IMR-90 (cell line): ENCODE measurements at regions of chr1 and their contacts with region 1.

Region 1: GRCh38 chr1:178093205-178093957 is 523 bp upstream of the RASAL2 start:
- DNase-seq: peak; percentile 96
- ATAC-seq: peak; percentile 85
- H3K4me3 ChIP-seq: peak overlapping the region; percentile 77
- H3K27ac ChIP-seq: peak overlapping the region; percentile 70
- H3K4me1 ChIP-seq: peaks cover 9% of the 10 kb centered on the region; the same call in 1 of the 2 replicates
- H3K27me3 ChIP-seq: no peaks in the 10 kb centered on the region
- CTCF ChIP-seq: 0 out of 2 replicates have a peak, but pooled peaks have one; percentile 4
- POLR2A ChIP-seq: no peak; the same call in none of the 2 replicates
- RAD21 ChIP-seq: no peak

Region 2: DNA sequence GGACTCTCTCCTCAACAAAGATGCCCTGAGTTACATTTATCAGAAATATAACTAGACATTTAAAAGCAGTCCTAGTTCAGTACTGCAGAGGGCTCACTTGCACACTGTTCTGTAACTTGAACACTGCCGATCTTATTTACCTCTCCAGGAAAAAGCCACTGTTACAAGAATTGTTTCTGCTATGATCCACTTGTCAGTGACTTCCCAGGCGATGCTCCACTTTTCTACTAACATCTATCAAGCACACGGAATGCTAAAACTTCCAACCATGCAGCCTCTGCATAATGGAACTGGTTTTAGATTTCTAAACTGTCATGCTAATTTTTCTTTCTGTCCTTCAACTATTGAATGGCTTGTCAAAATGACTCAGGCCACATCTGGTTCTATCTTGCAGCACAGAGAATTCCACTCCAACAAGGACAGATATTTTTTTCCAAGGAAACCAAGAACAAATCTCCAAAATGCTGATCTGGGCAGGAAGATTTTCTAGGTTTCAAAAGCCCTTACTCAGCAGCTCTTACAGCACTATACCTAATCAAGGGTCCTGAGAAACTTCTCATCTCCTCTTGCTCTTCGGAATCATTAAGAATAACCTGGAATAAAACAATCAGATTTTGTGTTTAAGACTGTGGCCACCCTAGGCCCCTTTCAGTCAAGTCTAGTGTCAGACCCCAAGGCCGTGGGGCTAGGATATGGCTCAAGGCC is 133.4 kb before region 1 on chr1:
- CTCF ChIA-PET with region 1: no interaction called
- POLR2A ChIA-PET with region 1: no interaction called
- dilution Hi-C with region 1: no loop called
- in situ Hi-C with region 1: no loop called
- intact Hi-C with region 1: loop called (anchors 2 kb)
- DNase-seq: peak; percentile 68
- ATAC-seq: peak; percentile 91
- H3K4me3 ChIP-seq: no peak overlapping the region
- H3K27ac ChIP-seq: no peak overlapping the region
- H3K4me1 ChIP-seq: peaks cover 15% of the 10 kb centered on the region
- H3K27me3 ChIP-seq: no peaks in the 10 kb centered on the region
- CTCF ChIP-seq: peak; percentile 66
- POLR2A ChIP-seq: no peak
- RAD21 ChIP-seq: peak; percentile 79

Region 3: GRCh38 chr1:178055779-178056471 is 37.5 kb before region 1 on chr1:
- CTCF ChIA-PET with region 1: no interaction called
- POLR2A ChIA-PET with region 1: no interaction called
- dilution Hi-C with region 1: no loop called
- in situ Hi-C with region 1: no loop called
- intact Hi-C with region 1: loop called (anchors 5 kb)
- DNase-seq: peak; percentile 25
- ATAC-seq: peak; percentile 44; the same call in 1 of the 2 replicates
- H3K4me3 ChIP-seq: no peak overlapping the region
- H3K27ac ChIP-seq: no peak overlapping the region
- H3K4me1 ChIP-seq: peaks cover 15% of the 10 kb centered on the region
- H3K27me3 ChIP-seq: no peaks in the 10 kb centered on the region
- CTCF ChIP-seq: 0 out of 2 replicates have a peak, but pooled peaks have one; percentile 8
- POLR2A ChIP-seq: no peak
- RAD21 ChIP-seq: no peak

Region 4: DNA sequence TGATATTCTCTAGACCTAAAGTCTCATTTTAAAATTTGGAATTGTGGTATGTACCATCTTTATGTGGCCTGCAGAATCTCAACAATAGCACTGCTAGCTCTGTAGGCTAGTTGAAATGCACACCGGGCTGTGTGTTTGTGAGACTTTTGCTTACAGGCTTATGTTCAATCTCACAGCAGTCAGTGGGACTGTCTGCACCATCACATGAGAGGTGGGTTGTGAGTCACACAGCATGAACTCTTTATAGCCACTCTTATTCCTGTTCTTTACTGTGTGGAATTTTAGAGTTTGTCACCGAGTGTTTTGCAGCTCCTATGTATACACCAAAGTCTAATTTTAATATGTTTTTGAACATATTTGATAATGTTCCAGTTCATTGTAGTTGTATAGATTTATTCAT is 75.2 kb after region 1 on chr1:
- CTCF ChIA-PET with region 1: no interaction called
- POLR2A ChIA-PET with region 1: no interaction called
- dilution Hi-C with region 1: no loop called
- in situ Hi-C with region 1: no loop called
- intact Hi-C with region 1: loop called (anchors 2 kb)
- DNase-seq: peak; percentile 77
- ATAC-seq: peak; percentile 90
- H3K4me3 ChIP-seq: no peak overlapping the region
- H3K27ac ChIP-seq: no peak overlapping the region
- H3K4me1 ChIP-seq: no peaks in the 10 kb centered on the region; the same call in 1 of the 2 replicates
- H3K27me3 ChIP-seq: no peaks in the 10 kb centered on the region
- CTCF ChIP-seq: no peak
- POLR2A ChIP-seq: no peak
- RAD21 ChIP-seq: no peak

Region 5: DNA sequence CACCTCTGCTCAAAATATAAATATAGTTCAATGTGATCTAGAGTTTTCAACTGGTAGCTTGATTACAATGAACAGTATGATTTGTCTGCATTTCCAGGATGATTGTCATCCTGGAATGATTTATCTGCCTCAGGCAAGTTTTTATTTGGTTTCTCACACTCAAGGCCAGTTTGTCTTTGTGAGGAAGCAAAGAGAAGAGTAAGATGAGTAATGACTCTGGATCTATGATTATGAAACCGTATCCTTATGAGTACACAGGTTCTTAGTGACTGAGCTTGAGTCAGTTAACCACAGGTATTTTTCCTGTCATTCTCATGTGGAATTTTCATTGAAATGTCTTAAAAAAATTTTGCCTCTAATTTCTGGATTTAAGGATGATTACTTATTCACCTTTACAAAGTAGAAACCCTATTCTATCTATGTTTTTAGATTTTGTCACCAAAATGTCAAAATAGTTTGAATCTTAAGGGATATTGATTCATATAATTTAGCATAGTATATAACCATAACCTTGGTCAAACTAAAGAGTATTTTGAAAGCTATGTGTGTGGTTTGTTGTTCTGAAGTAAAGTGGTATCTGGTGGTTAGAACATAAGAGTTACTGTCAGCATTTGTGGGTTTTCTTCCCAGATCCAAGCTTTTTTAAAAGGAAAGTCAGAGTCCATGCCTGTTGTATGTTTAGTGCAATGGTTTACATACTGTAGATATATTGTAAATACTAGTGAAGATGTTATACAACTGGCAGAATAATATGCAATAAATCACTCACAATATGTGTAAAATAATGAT is 145.5 kb after region 1 on chr1:
- CTCF ChIA-PET with region 1: no interaction called
- POLR2A ChIA-PET with region 1: interaction called, 3 read pairs
- dilution Hi-C with region 1: no loop called
- in situ Hi-C with region 1: no loop called
- intact Hi-C with region 1: loop called (anchors 5 kb)
- DNase-seq: peak; percentile 98
- ATAC-seq: peak; percentile 75
- H3K4me3 ChIP-seq: no peak overlapping the region
- H3K27ac ChIP-seq: peak overlapping the region; percentile 33; the same call in 1 of the 2 replicates
- H3K4me1 ChIP-seq: peaks cover 7% of the 10 kb centered on the region
- H3K27me3 ChIP-seq: no peaks in the 10 kb centered on the region
- CTCF ChIP-seq: no peak
- POLR2A ChIP-seq: no peak
- RAD21 ChIP-seq: peak; percentile 15; the same call in 1 of the 2 replicates

Region 6: GRCh38 chr1:178262120-178262500 is 168.7 kb after region 1 on chr1:
- CTCF ChIA-PET with region 1: no interaction called
- POLR2A ChIA-PET with region 1: no interaction called
- dilution Hi-C with region 1: no loop called
- in situ Hi-C with region 1: no loop called
- intact Hi-C with region 1: loop called (anchors 5 kb)
- DNase-seq: peak; percentile 92
- ATAC-seq: peak; percentile 80
- H3K4me3 ChIP-seq: no peak overlapping the region; the same call in 1 of the 2 replicates
- H3K27ac ChIP-seq: peak overlapping the region; percentile 40; the same call in 1 of the 2 replicates
- H3K4me1 ChIP-seq: peaks cover 4% of the 10 kb centered on the region
- H3K27me3 ChIP-seq: no peaks in the 10 kb centered on the region
- CTCF ChIP-seq: no peak
- POLR2A ChIP-seq: no peak; the same call in 1 of the 2 replicates
- RAD21 ChIP-seq: no peak

Region 7: DNA sequence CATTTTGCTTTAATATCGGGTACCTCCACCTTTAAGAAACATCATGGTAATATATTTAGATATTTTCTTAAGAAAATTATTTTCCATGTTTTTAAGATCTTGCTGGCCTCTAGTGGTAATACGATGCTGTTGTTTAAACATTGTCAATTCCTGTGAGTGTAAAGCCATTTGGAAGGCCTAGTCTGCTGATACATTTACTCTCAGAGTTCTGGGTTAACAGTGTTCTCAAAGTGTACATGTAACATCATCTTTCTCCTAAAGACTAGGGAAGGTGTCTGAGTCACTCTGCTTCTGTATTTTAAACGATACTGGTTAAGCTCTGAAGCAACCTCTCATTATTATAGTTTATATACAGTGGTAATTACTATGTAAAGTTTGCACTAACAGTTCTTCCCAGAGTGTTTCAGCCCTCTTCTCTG is 189.6 kb after region 1 on chr1:
- CTCF ChIA-PET with region 1: no interaction called
- POLR2A ChIA-PET with region 1: no interaction called
- dilution Hi-C with region 1: no loop called
- in situ Hi-C with region 1: no loop called
- intact Hi-C with region 1: loop called (anchors 2 kb)
- DNase-seq: peak; percentile 86
- ATAC-seq: peak; percentile 91
- H3K4me3 ChIP-seq: no peak overlapping the region
- H3K27ac ChIP-seq: no peak overlapping the region
- H3K4me1 ChIP-seq: peaks cover 13% of the 10 kb centered on the region
- H3K27me3 ChIP-seq: no peaks in the 10 kb centered on the region
- CTCF ChIP-seq: peak; percentile 70
- POLR2A ChIP-seq: no peak
- RAD21 ChIP-seq: peak; percentile 75